ENCODE measurements at regions of chr5 and their contacts with region 1.

Region 1: DNA sequence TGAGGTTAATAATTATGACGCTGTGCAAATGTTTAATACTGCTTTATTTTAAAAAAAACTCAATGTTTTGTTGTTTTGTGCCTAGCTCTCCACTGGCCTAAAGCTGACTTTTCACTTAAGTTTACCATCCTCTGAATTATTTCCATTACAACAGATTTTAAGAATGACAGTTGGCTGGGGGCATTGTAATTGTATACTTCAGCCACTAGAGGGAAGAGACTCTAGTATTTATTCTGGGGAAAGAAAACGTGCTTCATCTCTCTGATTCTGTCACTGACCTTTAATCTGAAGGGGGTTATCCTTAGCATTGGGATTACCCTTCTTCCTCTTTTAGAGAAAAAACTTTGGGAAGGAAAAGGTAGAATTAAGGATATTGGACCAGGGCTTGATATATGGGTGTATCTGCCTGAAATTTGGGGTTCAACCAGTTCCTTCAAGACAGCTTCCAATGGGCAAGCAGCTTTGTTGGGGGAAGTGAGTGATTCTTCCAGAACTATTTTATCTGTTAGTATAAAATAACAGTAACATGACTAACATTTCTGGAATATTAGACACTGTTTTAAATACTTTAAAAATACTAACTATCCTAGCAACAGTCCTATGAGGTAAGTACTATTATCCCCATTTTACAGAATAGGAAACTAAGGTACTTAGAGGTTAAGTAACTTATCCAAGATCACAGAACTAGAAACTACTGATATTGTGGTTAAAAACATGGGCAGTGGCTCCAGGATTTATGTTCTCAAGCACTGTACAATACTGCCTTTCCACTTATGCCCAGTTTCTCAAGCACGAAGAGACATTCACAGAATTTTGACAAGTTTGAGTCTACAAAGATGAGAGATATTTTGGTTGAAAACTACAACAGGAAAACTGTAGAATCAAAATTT is 208.4 kb downstream of the CD180 start:
- DNase-seq: peak; percentile 36 to 40
- ATAC-seq: peak; percentile 68 to 78; a peak in 4 of 6 replicates
- H3K4me3 ChIP-seq: no peak overlapping the region
- H3K27ac ChIP-seq: no peak overlapping the region
- H3K4me1 ChIP-seq: peaks cover 42% of the 10 kb centered on the region
- CTCF ChIP-seq: peak; percentile 57
- EP300 ChIP-seq: no peak
- POLR2A ChIP-seq: no peak
- RAD21 ChIP-seq: peak; percentile 62 to 63

Region 2: GRCh38 chr5:66974256-66974655 is 13.9 kb before region 1 on chr5:
- CTCF ChIA-PET with region 1: interaction called, 20 read pairs
- POLR2A ChIA-PET with region 1: interaction called, 3 read pairs
- DNase-seq: no peak
- ATAC-seq: no peak
- H3K4me3 ChIP-seq: no peak overlapping the region
- H3K27ac ChIP-seq: no peak overlapping the region; a peak in 1 of 6 replicates
- H3K4me1 ChIP-seq: no peaks in the 10 kb centered on the region
- CTCF ChIP-seq: no peak
- EP300 ChIP-seq: no peak
- POLR2A ChIP-seq: no peak
- RAD21 ChIP-seq: no peak

Region 3: DNA sequence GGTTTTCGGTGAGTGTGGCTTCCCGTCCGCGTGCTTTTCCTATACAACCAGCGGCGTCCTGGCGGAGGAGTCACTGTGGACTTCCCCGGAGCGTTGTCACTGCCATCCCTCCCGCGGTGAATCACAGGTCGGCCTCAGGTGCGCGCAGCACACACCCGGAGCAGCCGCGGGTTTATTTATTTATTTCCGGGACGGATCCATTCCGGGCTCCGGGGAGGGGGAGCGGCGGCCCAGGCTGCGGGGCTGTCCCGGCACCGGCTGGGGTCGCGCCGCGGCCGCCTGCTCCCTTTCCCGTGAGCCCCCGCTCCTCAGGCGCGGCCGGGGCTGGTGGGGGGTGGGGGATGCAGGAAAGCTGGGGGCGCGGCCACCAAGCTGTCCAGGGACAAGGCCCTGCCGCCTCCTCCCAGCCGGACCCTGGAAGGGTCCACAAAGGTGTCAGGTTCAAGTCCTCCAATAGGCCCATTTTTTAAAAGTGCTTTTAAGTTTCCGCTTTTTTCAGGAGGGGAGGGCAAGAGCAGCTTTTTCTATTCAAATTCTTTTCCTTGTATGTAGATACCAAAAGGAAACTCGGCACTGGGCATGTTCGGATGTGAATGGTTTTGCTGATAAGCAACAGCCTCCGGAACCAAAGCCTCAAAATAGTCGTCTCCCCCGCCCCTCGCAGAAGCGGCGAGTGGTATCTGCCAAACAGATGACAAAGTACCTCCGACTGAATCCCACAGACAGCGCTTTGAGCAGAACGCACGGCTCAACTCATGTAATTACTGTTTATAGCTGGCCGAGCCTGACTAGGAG is 15.9 kb after region 1 on chr5:
- CTCF ChIA-PET with region 1: interaction called, 34 read pairs
- POLR2A ChIA-PET with region 1: no interaction called
- DNase-seq: peak; percentile 71 to 83
- ATAC-seq: peak; percentile 87 to 93
- H3K4me3 ChIP-seq: peak overlapping the region; percentile 50
- H3K27ac ChIP-seq: peak overlapping the region; percentile 74 to 88
- H3K4me1 ChIP-seq: peaks cover 12% of the 10 kb centered on the region
- CTCF ChIP-seq: no peak
- EP300 ChIP-seq: no peak
- POLR2A ChIP-seq: peak; percentile 42
- RAD21 ChIP-seq: peak in 1 of 2 experiments; percentile 31; a peak in 2 of 5 replicates

Measured in A549 (cell line).